Brain microvascular endothelial cell (primary cell): ENCODE measurements at regions of chr17 and their contacts with region 1.

Region 1: DNA sequence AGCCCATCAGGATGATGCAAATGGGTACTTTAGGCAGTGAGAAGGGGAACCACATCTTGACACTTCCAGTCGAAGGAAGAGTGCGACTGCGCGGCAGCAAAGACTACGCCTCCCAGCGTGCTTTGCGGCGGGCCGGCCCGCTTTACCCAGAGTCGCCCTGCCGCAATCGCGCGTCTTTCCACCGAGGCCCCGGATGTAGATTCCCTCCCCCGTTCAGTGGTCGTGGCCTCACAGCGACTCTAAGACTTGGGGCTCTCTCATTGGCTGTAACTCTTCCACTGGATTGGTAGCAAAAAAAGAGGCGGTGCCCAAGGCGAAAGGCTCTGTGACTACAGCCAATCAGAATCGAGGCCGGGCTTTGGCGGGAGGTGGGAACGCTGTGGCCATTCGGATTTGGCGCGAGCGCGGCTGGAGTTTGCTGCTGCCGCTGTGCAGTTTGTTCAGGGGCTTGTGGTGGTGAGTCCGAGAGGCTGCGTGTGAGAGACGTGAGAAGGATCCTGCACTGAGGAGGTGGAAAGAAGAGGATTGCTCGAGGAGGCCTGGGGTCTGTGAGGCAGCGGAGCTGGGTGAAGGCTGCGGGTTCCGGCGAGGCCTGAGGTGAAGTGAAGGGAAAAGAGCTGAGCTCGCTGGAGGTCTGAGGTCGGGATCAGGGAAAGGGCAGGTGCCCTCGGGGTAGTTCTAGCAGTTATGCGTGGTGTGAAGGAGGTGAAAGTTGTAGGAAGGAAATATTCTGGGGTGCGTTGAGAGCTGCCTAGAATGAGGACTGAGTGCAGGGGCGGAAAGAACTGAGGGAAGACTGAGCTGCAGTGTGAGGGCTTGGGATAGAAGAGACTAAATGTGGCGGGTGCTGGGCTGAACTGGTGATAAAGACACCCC is at the start of gene CDC6:
- DNase-seq: peak; percentile 99
- H3K4me3 ChIP-seq: peak within 1 kb of the TSS; percentile 89
- H3K27ac ChIP-seq: peak within 1 kb of the TSS; percentile 18
- H3K27me3 ChIP-seq: no peaks in the 10 kb centered on the region
- CTCF ChIP-seq: no peak

Region 2: GRCh38 chr17:40191237-40192208 is 96.2 kb before region 1 on chr17:
- in situ Hi-C with region 1: loop called (anchors 25 kb)
- DNase-seq: peak; percentile 68
- H3K4me3 ChIP-seq: peak overlapping the region; percentile 57
- H3K27ac ChIP-seq: no peak overlapping the region
- H3K27me3 ChIP-seq: no peaks in the 10 kb centered on the region
- CTCF ChIP-seq: peak; percentile 90

Region 3: DNA sequence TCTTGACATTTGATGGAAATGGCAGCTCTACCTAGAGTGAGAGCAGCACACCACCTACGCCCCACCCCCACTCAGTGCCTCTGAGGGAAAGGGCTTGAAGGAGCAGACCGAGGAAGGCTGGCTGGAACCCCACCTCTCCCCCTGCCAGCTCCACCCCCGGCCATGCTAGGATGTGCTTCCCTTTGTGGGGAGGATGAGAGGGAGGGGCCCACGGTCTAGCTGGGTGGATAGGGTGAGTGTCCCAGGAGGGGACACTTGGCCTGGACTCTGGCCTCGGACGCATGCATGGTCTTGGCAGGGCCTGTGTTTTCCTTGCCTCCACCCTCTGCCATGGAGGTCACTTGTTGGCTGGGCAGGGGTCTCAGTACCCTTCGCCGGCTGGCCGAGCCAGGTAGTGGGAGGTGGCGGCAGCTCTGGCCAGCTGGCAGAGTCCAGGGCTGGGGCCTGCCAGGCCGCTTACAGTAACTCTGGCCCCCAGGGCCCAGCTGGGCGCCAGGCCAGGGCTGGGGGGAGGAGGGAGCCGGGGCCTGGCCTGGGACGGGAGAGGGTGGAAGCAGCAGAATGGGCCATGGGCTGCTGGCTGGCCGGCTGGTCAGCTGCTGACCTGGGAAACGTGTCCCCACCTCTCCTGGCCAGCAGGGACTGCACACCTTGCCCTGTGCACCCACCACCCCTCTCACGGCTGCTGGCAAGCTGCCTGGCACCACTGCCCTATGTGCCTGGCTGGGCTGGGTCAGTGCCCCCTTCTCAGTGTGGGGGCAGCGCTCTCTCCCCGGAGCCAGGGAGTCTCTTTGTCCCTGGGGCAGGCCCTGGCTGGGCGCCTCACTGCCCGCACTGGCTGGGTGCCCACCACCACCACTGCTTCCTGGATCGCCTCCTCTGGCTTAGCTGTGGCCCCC is 44.3 kb after region 1 on chr17:
- in situ Hi-C with region 1: no loop called
- DNase-seq: no peak
- H3K4me3 ChIP-seq: no peak overlapping the region
- H3K27ac ChIP-seq: no peak overlapping the region
- H3K27me3 ChIP-seq: no peaks in the 10 kb centered on the region
- CTCF ChIP-seq: no peak

Region 4: GRCh38 chr17:40399185-40399584 is 111.5 kb after region 1 on chr17:
- in situ Hi-C with region 1: no loop called
- DNase-seq: peak; percentile 12
- H3K4me3 ChIP-seq: no peak overlapping the region
- H3K27ac ChIP-seq: no peak overlapping the region
- H3K27me3 ChIP-seq: no peaks in the 10 kb centered on the region
- CTCF ChIP-seq: peak; percentile 43